ENCODE measurements at regions of chr10 and their contacts with region 1.

Region 1: GRCh38 chr10:108894402-108895301 is 1028.7 kb downstream of the XPNPEP1 start:
- DNase-seq: peak; percentile 68
- ATAC-seq: peak; percentile 80
- H3K4me3 ChIP-seq: peak overlapping the region in 1 of 5 experiments; percentile 11
- H3K4me3 Mint-ChIP-seq: peak overlapping the region; percentile 76
- H3K27ac ChIP-seq: peak overlapping the region; percentile 36 to 62
- H3K27ac Mint-ChIP-seq: peak overlapping the region; percentile 91
- H3K4me1 ChIP-seq: peaks cover 10 to 15% of the 10 kb centered on the region in 2 donors
- H3K4me1 Mint-ChIP-seq: peaks cover 25% of the 10 kb centered on the region
- H3K27me3 ChIP-seq: no peaks in the 10 kb centered on the region
- H3K27me3 Mint-ChIP-seq: no peaks in the 10 kb centered on the region
- CTCF ChIP-seq: no peak

Region 2: GRCh38 chr10:108850138-108850854 is 44.4 kb before region 1 on chr10:
- CTCF ChIA-PET with region 1: interaction called, 3 read pairs
- POLR2A ChIA-PET with region 1: no interaction called
- intact Hi-C with region 1: loop called (anchors 2 kb)
- DNase-seq: peak; percentile 64
- ATAC-seq: peak; percentile 76
- H3K4me3 ChIP-seq: peak overlapping the region in 1 of 5 experiments; percentile 29
- H3K4me3 Mint-ChIP-seq: peak overlapping the region; percentile 51
- H3K27ac ChIP-seq: peak overlapping the region in 1 of 2 donors; percentile 0
- H3K27ac Mint-ChIP-seq: no peak overlapping the region
- H3K4me1 ChIP-seq: peaks cover 34 to 36% of the 10 kb centered on the region in 2 donors
- H3K4me1 Mint-ChIP-seq: peaks cover 36% of the 10 kb centered on the region
- H3K27me3 ChIP-seq: no peaks in the 10 kb centered on the region
- H3K27me3 Mint-ChIP-seq: no peaks in the 10 kb centered on the region
- CTCF ChIP-seq: no peak

Region 3: DNA sequence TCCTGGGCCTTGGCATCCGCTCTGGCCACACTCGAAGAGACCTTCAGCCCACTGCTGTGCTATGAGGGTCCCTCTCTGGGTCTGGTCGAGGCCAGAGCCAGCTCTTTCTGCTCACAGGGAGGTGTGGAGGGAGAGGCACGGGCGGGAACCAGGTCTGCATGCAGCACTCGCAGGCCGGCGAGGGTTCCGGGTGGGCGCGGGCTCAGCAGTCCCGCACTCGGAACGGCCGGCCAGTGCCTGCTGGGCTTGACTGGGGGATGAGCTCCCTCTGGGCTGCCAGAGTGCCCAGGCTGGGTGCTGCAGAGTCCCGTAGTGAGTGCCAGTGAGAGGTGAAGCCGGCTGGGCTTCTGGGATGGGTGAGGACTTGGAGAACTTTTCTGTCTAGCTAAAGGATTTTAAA is 146.0 kb after region 1 on chr10:
- CTCF ChIA-PET with region 1: no interaction called
- POLR2A ChIA-PET with region 1: no interaction called
- intact Hi-C with region 1: no loop called
- DNase-seq: no peak
- ATAC-seq: no peak
- H3K4me3 ChIP-seq: no peak overlapping the region
- H3K4me3 Mint-ChIP-seq: no peak overlapping the region
- H3K27ac ChIP-seq: no peak overlapping the region
- H3K27ac Mint-ChIP-seq: no peak overlapping the region
- H3K4me1 ChIP-seq: no peaks in the 10 kb centered on the region
- H3K4me1 Mint-ChIP-seq: no peaks in the 10 kb centered on the region
- H3K27me3 ChIP-seq: no peaks in the 10 kb centered on the region
- H3K27me3 Mint-ChIP-seq: no peaks in the 10 kb centered on the region
- CTCF ChIP-seq: no peak

Measured in B cell (primary cell).